ENCODE measurements at regions of chr1 and their contacts with region 1.

Region 1: DNA sequence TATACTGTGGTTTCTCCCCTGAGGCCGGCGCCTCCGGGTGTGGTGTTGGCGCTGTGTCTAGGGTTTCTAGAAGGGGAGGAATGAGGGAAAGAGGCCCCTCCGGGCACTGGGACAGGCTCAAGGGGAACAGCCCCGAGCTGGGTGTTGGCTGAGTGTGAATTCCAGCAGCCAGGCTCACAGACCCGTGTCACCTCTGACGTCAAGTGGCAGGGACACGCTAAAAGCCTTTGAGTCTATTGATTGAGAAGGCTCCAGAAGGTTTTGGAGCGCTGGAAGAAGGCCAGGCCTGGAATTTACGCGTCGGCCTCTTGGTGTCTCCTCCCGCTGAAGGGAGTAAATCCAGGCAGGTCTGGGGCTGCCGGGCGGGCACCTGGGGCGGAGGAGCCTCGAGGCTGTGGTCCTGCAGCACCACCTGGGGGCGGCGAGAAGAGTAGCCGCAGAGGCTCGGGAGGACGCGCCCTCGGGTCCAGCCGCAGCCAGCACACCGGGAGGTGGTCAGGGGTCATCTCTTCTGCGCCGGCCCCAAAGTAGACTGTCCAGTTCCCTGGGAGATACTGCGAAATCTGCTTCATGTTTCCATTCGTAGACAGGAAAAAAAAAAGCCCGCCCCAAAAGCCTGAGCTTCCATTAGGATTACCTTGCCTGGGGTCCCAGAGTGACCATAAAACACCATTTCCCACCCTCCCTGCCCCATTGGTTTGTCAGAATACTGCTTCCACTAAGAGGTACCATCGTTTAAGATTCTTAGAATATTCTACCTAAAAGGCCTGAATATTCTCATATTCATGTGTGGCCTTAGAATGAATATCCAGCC is 61.7 kb downstream of the TLR5 start:
- DNase-seq: no peak
- H3K4me3 ChIP-seq: peak overlapping the region; percentile 38 to 56
- H3K27ac ChIP-seq: peak overlapping the region; percentile 64
- H3K4me1 ChIP-seq: peaks cover under 1% of the 10 kb centered on the region
- H3K27me3 ChIP-seq: no peaks in the 10 kb centered on the region
- CTCF ChIP-seq: peak; percentile 76 to 95 (median 92)
- POLR2A ChIP-seq: no peak

Region 2: GRCh38 chr1:222792744-222793143 is 288.6 kb before region 1 on chr1:
- intact Hi-C with region 1: loop called (anchors 2 kb)
- DNase-seq: no peak
- H3K4me3 ChIP-seq: no peak overlapping the region
- H3K27ac ChIP-seq: no peak overlapping the region
- H3K4me1 ChIP-seq: peaks cover 4% of the 10 kb centered on the region
- H3K27me3 ChIP-seq: no peaks in the 10 kb centered on the region
- CTCF ChIP-seq: peak; percentile 25 to 58 (median 39)
- POLR2A ChIP-seq: no peak